Activated CD8-positive, alpha-beta T cell treated with anti-CD3 and anti-CD28 coated beads for 36 hours (primary cell): ENCODE measurements at regions of chr22 and their contacts with region 1.

Region 1: DNA sequence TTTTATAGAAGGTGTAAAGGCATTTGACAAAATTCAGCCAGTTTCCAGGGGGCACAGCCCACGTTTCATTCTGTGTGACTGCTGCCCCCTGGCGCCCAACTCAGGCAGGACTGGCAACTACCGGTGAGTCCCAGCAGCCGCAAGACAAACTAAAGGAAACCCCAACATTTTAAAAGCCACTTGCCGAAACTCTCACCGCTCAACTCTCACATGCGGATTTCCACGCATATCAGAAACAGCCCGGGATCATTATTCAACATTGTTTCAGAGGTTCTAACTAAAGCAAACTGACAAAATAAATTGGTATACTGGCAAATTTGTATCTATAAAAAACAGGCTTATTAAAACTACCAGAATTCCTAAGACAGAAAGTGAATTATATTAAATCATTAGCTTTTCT is 48.2 kb downstream of the MORC2 start:
- DNase-seq: peak; percentile 93
- ATAC-seq: peak; percentile 79
- H3K4me3 Mint-ChIP-seq: peak overlapping the region; percentile 73
- H3K27ac Mint-ChIP-seq: peak overlapping the region; percentile 56
- H3K4me1 Mint-ChIP-seq: peaks cover 15% of the 10 kb centered on the region
- H3K27me3 Mint-ChIP-seq: no peaks in the 10 kb centered on the region
- CTCF ChIP-seq: peak; percentile 99

Region 2: GRCh38 chr22:30628491-30628890 is 291.9 kb before region 1 on chr22:
- CTCF ChIA-PET with region 1: no interaction called
- POLR2A ChIA-PET with region 1: no interaction called
- intact Hi-C with region 1: loop called (anchors 10 kb)
- DNase-seq: no peak
- ATAC-seq: no peak
- H3K4me3 Mint-ChIP-seq: no peak overlapping the region
- H3K27ac Mint-ChIP-seq: no peak overlapping the region
- H3K4me1 Mint-ChIP-seq: no peaks in the 10 kb centered on the region
- H3K27me3 Mint-ChIP-seq: no peaks in the 10 kb centered on the region
- CTCF ChIP-seq: no peak

Region 3: DNA sequence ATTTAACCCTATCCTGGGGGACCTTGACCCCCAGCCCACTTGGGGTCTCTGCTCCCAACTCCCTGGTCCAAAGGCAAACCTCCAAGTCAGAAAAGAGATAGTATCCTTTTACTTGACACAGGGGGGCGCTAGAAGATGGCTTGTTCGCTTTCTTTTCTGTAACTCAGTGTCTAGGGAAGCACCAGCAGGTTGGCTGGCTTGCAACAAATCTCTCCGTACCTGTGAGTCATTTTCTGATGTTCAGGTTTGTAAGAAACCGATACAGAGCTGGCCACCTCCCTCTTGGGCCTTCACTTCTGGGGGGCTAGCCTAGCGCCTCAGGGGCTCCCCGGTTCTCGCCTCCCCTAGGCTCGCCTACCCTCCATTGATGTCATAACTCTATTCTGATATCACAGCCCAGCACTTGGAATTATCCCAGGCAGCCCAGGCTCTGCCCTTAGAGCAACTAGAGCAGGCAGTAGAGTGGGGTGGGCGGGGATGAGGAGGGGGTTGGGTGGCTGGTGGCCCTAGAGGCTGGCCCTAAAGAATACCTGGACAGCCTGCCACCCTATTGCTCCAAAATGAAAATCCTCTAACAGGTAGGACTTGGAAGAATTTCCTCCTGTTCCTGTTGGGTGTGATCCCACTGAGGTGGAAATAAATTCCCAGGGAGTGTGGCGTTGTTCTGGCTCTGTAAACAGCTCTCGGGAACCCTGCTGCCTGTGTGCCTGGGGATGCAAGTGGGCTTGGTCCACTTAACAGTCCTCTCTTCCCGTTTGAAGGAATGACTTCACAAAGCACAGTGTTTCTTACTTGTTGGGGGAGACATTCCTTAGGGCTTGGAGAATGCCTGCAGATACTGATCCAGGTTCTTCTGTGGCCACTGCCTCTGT is 156.4 kb before region 1 on chr22:
- CTCF ChIA-PET with region 1: interaction called, 20 read pairs
- POLR2A ChIA-PET with region 1: interaction called, 6 read pairs
- intact Hi-C with region 1: loop called (anchors 2 kb)
- DNase-seq: peak; percentile 75
- ATAC-seq: peak; percentile 97
- H3K4me3 Mint-ChIP-seq: no peak overlapping the region
- H3K27ac Mint-ChIP-seq: no peak overlapping the region
- H3K4me1 Mint-ChIP-seq: peaks cover 2% of the 10 kb centered on the region
- H3K27me3 Mint-ChIP-seq: no peaks in the 10 kb centered on the region
- CTCF ChIP-seq: peak; percentile 83

Region 4: DNA sequence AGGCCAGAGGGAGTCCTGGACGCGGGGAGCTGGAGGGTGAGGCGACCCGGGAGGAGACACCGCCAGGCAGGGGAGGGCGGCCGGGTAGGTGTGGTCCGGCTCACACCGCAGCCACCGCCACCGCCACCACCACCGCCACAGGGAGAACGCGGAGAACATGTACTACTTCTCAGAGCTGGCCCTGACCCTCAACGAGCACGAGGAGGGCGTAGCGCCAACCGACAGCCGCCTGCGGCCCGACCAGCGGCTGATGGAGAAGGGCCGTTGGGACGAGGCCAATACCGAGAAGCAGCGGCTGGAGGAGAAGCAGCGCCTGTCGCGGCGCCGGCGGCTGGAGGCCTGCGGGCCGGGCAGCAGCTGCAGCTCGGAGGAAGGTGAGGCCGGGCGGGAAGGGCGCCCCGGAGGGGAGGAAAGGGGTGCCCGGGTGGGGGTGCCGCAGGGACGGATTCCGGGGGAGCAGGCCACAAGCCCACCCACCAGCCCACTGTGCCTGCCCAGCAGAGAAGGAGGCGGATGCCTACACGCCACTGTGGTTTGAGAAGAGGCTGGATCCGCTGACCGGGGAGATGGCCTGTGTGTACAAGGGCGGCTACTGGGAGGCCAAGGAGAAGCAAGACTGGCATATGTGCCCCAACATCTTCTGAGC is 14.6 kb before region 1 on chr22:
- CTCF ChIA-PET with region 1: interaction called, 14 read pairs
- POLR2A ChIA-PET with region 1: no interaction called
- intact Hi-C with region 1: no loop called
- DNase-seq: no peak
- ATAC-seq: no peak
- H3K4me3 Mint-ChIP-seq: no peak overlapping the region
- H3K27ac Mint-ChIP-seq: no peak overlapping the region
- H3K4me1 Mint-ChIP-seq: peaks cover 4% of the 10 kb centered on the region
- H3K27me3 Mint-ChIP-seq: no peaks in the 10 kb centered on the region
- CTCF ChIP-seq: no peak

Region 5: GRCh38 chr22:30940685-30941362 is 20.4 kb after region 1 on chr22:
- CTCF ChIA-PET with region 1: interaction called, 8 read pairs
- POLR2A ChIA-PET with region 1: interaction called, 19 read pairs
- intact Hi-C with region 1: no loop called
- DNase-seq: peak; percentile 71
- ATAC-seq: peak; percentile 70
- H3K4me3 Mint-ChIP-seq: peak overlapping the region; percentile 35
- H3K27ac Mint-ChIP-seq: peak overlapping the region; percentile 81
- H3K4me1 Mint-ChIP-seq: peaks cover 67% of the 10 kb centered on the region
- H3K27me3 Mint-ChIP-seq: no peaks in the 10 kb centered on the region
- CTCF ChIP-seq: no peak